ENCODE measurements at regions of chr21 and their contacts with region 1.

Region 1: GRCh38 chr21:31580866-31581276 is 78.6 kb upstream of the SOD1 start:
- DNase-seq: peak; percentile 26
- ATAC-seq: peak; percentile 96
- H3K4me3 ChIP-seq: no peak overlapping the region
- H3K27ac ChIP-seq: no peak overlapping the region
- H3K4me1 ChIP-seq: no peaks in the 10 kb centered on the region
- H3K27me3 ChIP-seq: no peaks in the 10 kb centered on the region
- CTCF ChIP-seq: peak; percentile 79 to 87 (median 86)
- EP300 ChIP-seq: no peak
- POLR2A ChIP-seq: no peak
- RAD21 ChIP-seq: peak; percentile 87

Region 2: DNA sequence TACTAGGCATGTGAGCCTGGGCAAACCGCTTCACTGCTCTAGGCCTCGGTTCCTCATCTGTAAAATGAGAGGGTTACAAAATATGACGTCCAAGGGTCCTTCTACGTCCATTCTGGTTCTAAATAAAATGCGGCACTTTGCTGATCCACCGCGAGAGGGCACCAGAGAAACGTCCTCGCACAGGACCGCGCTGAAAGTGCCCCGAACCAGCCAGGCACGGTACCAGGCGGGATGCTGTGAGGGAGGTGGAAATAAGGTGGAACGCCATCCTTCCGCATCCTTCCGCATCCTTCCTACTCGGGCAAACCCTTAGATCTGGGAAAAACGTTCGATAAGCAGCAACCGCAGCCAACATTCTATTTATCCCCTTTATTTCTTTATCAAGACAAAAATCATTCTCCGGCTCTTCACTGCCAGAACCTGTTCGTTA is 482.3 kb before region 1 on chr21:
- CTCF ChIA-PET with region 1: interaction called, 19 read pairs
- POLR2A ChIA-PET with region 1: interaction called, 3 read pairs
- RAD21 ChIA-PET with region 1: interaction called, 6 read pairs
- SMC1A ChIA-PET with region 1: interaction called, 13 read pairs
- in situ Hi-C with region 1: no loop called
- intact Hi-C with region 1: loop called (anchors 2 kb)
- DNase-seq: no peak
- ATAC-seq: peak; percentile 91
- H3K4me3 ChIP-seq: no peak overlapping the region
- H3K27ac ChIP-seq: no peak overlapping the region
- H3K4me1 ChIP-seq: 0 out of 2 replicates have a peak, but pooled peaks cover 2% of the 10 kb centered on the region
- H3K27me3 ChIP-seq: no peaks in the 10 kb centered on the region
- CTCF ChIP-seq: peak; percentile 80 to 88 (median 80)
- EP300 ChIP-seq: no peak
- POLR2A ChIP-seq: no peak
- RAD21 ChIP-seq: peak; percentile 86

Region 3: DNA sequence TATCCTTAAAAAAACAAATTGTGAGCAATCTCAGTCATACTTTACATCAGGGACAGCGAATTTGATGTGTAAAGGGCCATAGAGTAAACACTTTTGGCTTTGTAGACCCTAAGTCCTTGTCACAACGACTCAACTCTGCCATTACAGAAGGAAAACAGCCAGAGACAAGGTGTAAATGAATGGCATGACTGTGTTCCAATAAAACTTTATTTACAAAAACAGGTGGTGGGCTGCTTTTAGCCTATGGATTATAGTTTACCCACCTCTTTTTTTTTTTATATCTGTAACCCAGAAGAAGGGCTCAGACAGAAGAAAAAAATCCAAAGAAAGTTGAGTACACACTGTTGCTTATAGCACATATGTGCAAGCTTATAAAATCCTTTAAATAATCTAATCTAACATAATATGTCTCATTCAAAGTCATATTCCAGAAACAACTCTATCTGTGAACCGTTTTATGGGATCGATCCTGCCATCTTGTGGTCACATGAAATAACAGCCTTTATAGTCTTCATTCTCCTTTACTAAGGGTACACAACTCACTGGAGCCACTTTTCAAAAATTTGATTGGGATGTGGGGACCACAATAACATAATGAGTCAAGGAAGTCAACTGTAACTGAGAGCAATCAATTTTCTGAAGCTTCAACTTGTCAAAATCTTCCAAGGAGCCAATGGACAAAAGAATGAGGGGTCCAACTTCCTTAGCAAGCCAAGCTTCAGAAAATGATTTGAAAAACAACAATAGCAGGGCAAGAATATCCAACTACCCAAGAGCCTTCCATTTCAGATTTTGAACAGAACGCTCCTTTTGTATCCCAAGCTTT is 400.4 kb before region 1 on chr21:
- CTCF ChIA-PET with region 1: interaction called, 16 read pairs
- POLR2A ChIA-PET with region 1: no interaction called
- RAD21 ChIA-PET with region 1: interaction called, 3 read pairs
- SMC1A ChIA-PET with region 1: interaction called, 13 read pairs
- in situ Hi-C with region 1: no loop called
- intact Hi-C with region 1: no loop called
- DNase-seq: no peak
- ATAC-seq: peak; percentile 65
- H3K4me3 ChIP-seq: no peak overlapping the region
- H3K27ac ChIP-seq: no peak overlapping the region
- H3K4me1 ChIP-seq: no peaks in the 10 kb centered on the region
- H3K27me3 ChIP-seq: no peaks in the 10 kb centered on the region
- CTCF ChIP-seq: peak; percentile 21 to 52 (median 43); a peak in 5 of 6 replicates
- EP300 ChIP-seq: no peak
- POLR2A ChIP-seq: no peak
- RAD21 ChIP-seq: peak; percentile 41; the same call in 1 of the 2 replicates

Region 4: GRCh38 chr21:31213795-31214194 is 367.1 kb before region 1 on chr21:
- CTCF ChIA-PET with region 1: interaction called, 18 read pairs
- POLR2A ChIA-PET with region 1: no interaction called
- RAD21 ChIA-PET with region 1: interaction called, 10 read pairs
- SMC1A ChIA-PET with region 1: interaction called, 6 read pairs
- in situ Hi-C with region 1: no loop called
- intact Hi-C with region 1: no loop called
- DNase-seq: no peak
- ATAC-seq: no peak
- H3K4me3 ChIP-seq: no peak overlapping the region
- H3K27ac ChIP-seq: no peak overlapping the region
- H3K4me1 ChIP-seq: no peaks in the 10 kb centered on the region
- H3K27me3 ChIP-seq: no peaks in the 10 kb centered on the region
- CTCF ChIP-seq: peak in 1 of 3 experiments; percentile 31; a peak in 1 of 6 replicates
- EP300 ChIP-seq: no peak
- POLR2A ChIP-seq: no peak
- RAD21 ChIP-seq: 0 out of 2 replicates have a peak, but pooled peaks have one; percentile 3

Region 5: GRCh38 chr21:31343680-31344480 is 237.0 kb before region 1 on chr21 and contains the start of gene TIAM1:
- CTCF ChIA-PET with region 1: interaction called, 12 read pairs
- POLR2A ChIA-PET with region 1: no interaction called
- RAD21 ChIA-PET with region 1: interaction called, 9 read pairs
- SMC1A ChIA-PET with region 1: interaction called, 6 read pairs
- in situ Hi-C with region 1: no loop called
- intact Hi-C with region 1: loop called (anchors 2 kb)
- DNase-seq: no peak
- ATAC-seq: peak; percentile 76
- H3K4me3 ChIP-seq: no peak within 1 kb of the TSS
- H3K27ac ChIP-seq: no peak within 1 kb of the TSS
- H3K4me1 ChIP-seq: no peaks in the 10 kb centered on the region
- H3K27me3 ChIP-seq: no peaks in the 10 kb centered on the region; a peak in 1 of 4 replicates
- CTCF ChIP-seq: no peak
- EP300 ChIP-seq: no peak
- POLR2A ChIP-seq: no peak
- RAD21 ChIP-seq: no peak
- polyA plus RNA-seq, gene TIAM1: 0.31 to 0.42 TPM

Region 6: DNA sequence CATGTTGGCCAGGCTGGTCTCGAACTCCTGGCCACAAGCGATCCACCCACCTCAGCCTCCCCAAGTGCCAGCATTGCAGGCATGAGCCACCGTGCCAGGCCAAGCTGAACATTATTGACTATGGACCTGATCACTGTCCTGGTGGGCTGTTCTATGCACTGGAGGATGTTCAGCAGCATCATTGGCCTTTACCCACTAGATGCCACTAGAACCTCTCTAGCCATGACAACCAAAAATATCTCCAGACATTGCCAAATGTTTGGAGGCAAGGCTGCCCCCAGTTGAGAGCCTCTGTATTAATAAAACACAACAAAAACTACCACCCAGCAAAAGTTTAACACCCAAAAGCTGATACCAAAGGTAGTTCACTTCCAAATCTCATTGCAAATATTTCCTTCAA is 32.2 kb before region 1 on chr21:
- CTCF ChIA-PET with region 1: interaction called, 12 read pairs
- POLR2A ChIA-PET with region 1: no interaction called
- RAD21 ChIA-PET with region 1: interaction called, 4 read pairs
- SMC1A ChIA-PET with region 1: interaction called, 5 read pairs
- in situ Hi-C with region 1: no loop called
- intact Hi-C with region 1: no loop called
- DNase-seq: no peak
- ATAC-seq: peak; percentile 61
- H3K4me3 ChIP-seq: no peak overlapping the region
- H3K27ac ChIP-seq: no peak overlapping the region
- H3K4me1 ChIP-seq: peaks cover 3% of the 10 kb centered on the region
- H3K27me3 ChIP-seq: no peaks in the 10 kb centered on the region
- CTCF ChIP-seq: no peak; a peak in 1 of 6 replicates
- EP300 ChIP-seq: no peak
- POLR2A ChIP-seq: no peak
- RAD21 ChIP-seq: no peak

Region 7: GRCh38 chr21:31604591-31605190 is 23.8 kb after region 1 on chr21:
- CTCF ChIA-PET with region 1: interaction called, 16 read pairs
- POLR2A ChIA-PET with region 1: no interaction called
- RAD21 ChIA-PET with region 1: interaction called, 3 read pairs
- SMC1A ChIA-PET with region 1: interaction called, 6 read pairs
- in situ Hi-C with region 1: no loop called
- intact Hi-C with region 1: no loop called
- DNase-seq: peak; percentile 19
- ATAC-seq: peak; percentile 94
- H3K4me3 ChIP-seq: no peak overlapping the region
- H3K27ac ChIP-seq: no peak overlapping the region
- H3K4me1 ChIP-seq: no peaks in the 10 kb centered on the region
- H3K27me3 ChIP-seq: no peaks in the 10 kb centered on the region
- CTCF ChIP-seq: peak; percentile 74 to 87 (median 85)
- EP300 ChIP-seq: no peak
- POLR2A ChIP-seq: no peak
- RAD21 ChIP-seq: peak; percentile 87